Tibial artery (tissue), 4 donors: ENCODE measurements at regions of chr17 and their contacts with region 1.

Region 1: GRCh38 chr17:67376737-67377487 is at the start of gene PITPNC1:
- DNase-seq: peak; percentile 83 to 91
- H3K4me3 ChIP-seq: peak within 1 kb of the TSS; percentile 76 to 79
- H3K27ac ChIP-seq: peak within 1 kb of the TSS; percentile 90 to 93
- H3K4me1 ChIP-seq: peaks cover 0 to 29% (median 12%) of the 10 kb centered on the region in 4 donors
- H3K27me3 ChIP-seq: no peaks in the 10 kb centered on the region
- CTCF ChIP-seq: peak in 1 of 2 experiments; percentile 11

Region 2: GRCh38 chr17:67475236-67475937 is 98.5 kb after region 1 on chr17:
- intact Hi-C with region 1: loop called (anchors 2 kb)
- DNase-seq: peak; percentile 70 to 82
- H3K4me3 ChIP-seq: no peak overlapping the region
- H3K27ac ChIP-seq: no peak overlapping the region
- H3K4me1 ChIP-seq: peaks cover 0 to 13% (median 3%) of the 10 kb centered on the region in 4 donors
- H3K27me3 ChIP-seq: no peaks in the 10 kb centered on the region
- CTCF ChIP-seq: peak; percentile 69 to 78

Region 3: DNA sequence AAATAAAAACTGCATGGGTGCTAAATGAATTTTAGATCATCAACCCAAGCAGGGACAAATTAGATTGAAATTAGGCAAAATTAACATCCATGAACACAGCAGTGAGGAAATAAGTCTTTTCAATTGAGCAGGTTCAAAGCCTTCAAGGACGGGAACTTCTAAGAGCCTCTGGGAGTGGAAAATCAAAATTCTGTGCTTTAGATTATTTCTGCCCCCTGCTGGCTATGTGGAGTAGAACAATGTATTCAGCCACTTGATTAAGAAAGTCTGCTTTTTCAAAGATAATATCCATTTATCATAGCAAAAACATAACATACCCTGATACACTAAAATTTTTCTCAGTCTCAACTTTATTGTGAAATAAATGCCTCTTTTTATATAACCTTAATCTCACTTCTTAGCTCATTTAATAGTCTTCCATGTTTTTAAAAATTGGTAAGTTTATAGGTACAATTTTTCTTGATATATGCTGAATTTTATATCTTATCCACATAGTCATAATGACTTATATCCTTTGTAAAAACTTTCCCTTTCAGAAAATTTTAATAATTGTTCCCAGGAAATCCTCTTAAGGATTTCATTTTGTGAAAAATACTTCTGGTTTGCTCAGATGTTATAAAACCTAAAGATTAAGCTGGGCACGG is 312.7 kb after region 1 on chr17:
- intact Hi-C with region 1: loop called (anchors 5 kb)
- DNase-seq: peak in 1 of 2 donors; percentile 51
- H3K4me3 ChIP-seq: no peak overlapping the region
- H3K27ac ChIP-seq: no peak overlapping the region
- H3K4me1 ChIP-seq: peaks cover 0 to 5% (median 0%) of the 10 kb centered on the region in 4 donors
- H3K27me3 ChIP-seq: no peaks in the 10 kb centered on the region
- CTCF ChIP-seq: peak; percentile 75 to 87